IMR-90 (cell line): ENCODE measurements at regions of chr7 and their contacts with region 1.

Region 1: GRCh38 chr7:93115796-93116195 is 2.0 kb downstream of the SAMD9 start:
- DNase-seq: peak; percentile 75
- ATAC-seq: peak; percentile 71
- H3K4me3 ChIP-seq: no peak overlapping the region
- H3K27ac ChIP-seq: peak overlapping the region; percentile 72
- H3K4me1 ChIP-seq: peaks cover 7% of the 10 kb centered on the region
- H3K27me3 ChIP-seq: no peaks in the 10 kb centered on the region
- CTCF ChIP-seq: no peak
- POLR2A ChIP-seq: no peak
- RAD21 ChIP-seq: no peak

Region 2: DNA sequence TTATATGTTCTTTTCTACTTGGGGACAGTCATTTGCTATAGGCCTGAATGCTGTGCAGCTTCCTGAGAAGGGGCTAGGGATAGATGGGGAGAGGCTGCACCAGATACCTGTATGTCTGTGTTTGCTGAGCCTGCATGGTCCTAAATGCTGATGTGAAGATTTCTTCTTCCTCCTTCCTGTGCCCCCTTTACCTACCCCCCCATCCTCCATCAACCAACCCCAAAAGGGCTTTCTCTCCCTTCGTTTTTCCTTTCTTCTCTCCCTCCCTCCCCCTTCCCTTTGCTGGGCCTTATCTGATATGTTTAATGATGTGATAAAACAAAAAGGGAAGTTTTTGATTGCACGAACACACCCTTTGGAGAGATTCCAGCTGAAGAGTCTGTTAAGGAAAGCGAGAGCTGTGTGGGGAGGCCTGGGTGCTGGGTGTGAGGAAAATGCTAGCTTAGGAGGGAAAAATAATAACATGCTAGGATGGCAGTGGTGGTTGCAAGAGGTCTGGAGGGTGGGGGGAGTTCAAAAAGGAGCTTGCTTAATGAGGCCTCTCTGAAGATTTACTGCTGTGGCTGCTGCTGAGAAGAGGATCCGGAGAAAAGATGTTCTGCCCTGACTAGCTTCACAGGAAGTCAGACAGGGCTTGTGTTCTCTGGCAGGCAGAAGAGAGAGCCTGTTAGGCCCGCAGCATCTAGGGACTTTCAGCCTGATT is 99.9 kb before region 1 on chr7:
- CTCF ChIA-PET with region 1: no interaction called
- POLR2A ChIA-PET with region 1: no interaction called
- dilution Hi-C with region 1: no loop called
- in situ Hi-C with region 1: no loop called
- intact Hi-C with region 1: no loop called
- DNase-seq: peak; percentile 45
- ATAC-seq: 0 out of 2 replicates have a peak, but pooled peaks have one; percentile 3
- H3K4me3 ChIP-seq: no peak overlapping the region
- H3K27ac ChIP-seq: peak overlapping the region; percentile 93
- H3K4me1 ChIP-seq: peaks cover 39% of the 10 kb centered on the region
- H3K27me3 ChIP-seq: no peaks in the 10 kb centered on the region
- CTCF ChIP-seq: no peak
- POLR2A ChIP-seq: no peak
- RAD21 ChIP-seq: no peak

Region 3: GRCh38 chr7:93147363-93147762 is 31.6 kb after region 1 on chr7:
- CTCF ChIA-PET with region 1: interaction called, 3 read pairs
- POLR2A ChIA-PET with region 1: interaction called, 3 read pairs
- dilution Hi-C with region 1: no loop called
- in situ Hi-C with region 1: no loop called
- intact Hi-C with region 1: loop called (anchors 2 kb)
- DNase-seq: peak; percentile 59
- ATAC-seq: peak; percentile 62
- H3K4me3 ChIP-seq: peak overlapping the region; percentile 46
- H3K27ac ChIP-seq: peak overlapping the region; percentile 6; the same call in 1 of the 2 replicates
- H3K4me1 ChIP-seq: peaks cover 7% of the 10 kb centered on the region; the same call in 1 of the 2 replicates
- H3K27me3 ChIP-seq: no peaks in the 10 kb centered on the region
- CTCF ChIP-seq: no peak
- POLR2A ChIP-seq: no peak
- RAD21 ChIP-seq: no peak